CD8-positive, alpha-beta memory T cell (primary cell): ENCODE measurements at regions of chrX and their contacts with region 1.

Region 1: GRCh38 chrX:53071604-53072417 is 10.4 kb upstream of the TSPYL2 start:
- DNase-seq: peak; percentile 35 to 84 (median 78)
- H3K4me3 ChIP-seq: peak overlapping the region; percentile 81
- H3K4me3 Mint-ChIP-seq: peak overlapping the region; percentile 87 to 94 (median 93)
- H3K27ac ChIP-seq: no peak overlapping the region
- H3K27ac Mint-ChIP-seq: peak overlapping the region; percentile 80 to 96 (median 88)
- H3K4me1 ChIP-seq: peaks cover 7% of the 10 kb centered on the region
- H3K4me1 Mint-ChIP-seq: peaks cover 10 to 19% (median 13%) of the 10 kb centered on the region in 3 donors
- H3K27me3 ChIP-seq: no peaks in the 10 kb centered on the region
- H3K27me3 Mint-ChIP-seq: peaks cover 4 to 7% of the 10 kb centered on the region in 2 donors

Region 2: GRCh38 chrX:53031380-53031779 is 40.4 kb before region 1 on chrX:
- CTCF ChIA-PET with region 1: no interaction called
- POLR2A ChIA-PET with region 1: no interaction called
- DNase-seq: no peak
- H3K4me3 ChIP-seq: no peak overlapping the region
- H3K4me3 Mint-ChIP-seq: no peak overlapping the region
- H3K27ac ChIP-seq: no peak overlapping the region
- H3K27ac Mint-ChIP-seq: no peak overlapping the region
- H3K4me1 ChIP-seq: no peaks in the 10 kb centered on the region
- H3K4me1 Mint-ChIP-seq: no peaks in the 10 kb centered on the region
- H3K27me3 ChIP-seq: no peaks in the 10 kb centered on the region
- H3K27me3 Mint-ChIP-seq: peaks cover 13 to 18% of the 10 kb centered on the region in 2 donors

Region 3: GRCh38 chrX:53081925-53082772 is 10.3 kb after region 1 on chrX and contains the start of gene TSPYL2:
- CTCF ChIA-PET with region 1: interaction called, 9 read pairs
- POLR2A ChIA-PET with region 1: interaction called, 28 read pairs
- DNase-seq: peak; percentile 88 to 97 (median 93)
- H3K4me3 ChIP-seq: peak within 1 kb of the TSS; percentile 67
- H3K4me3 Mint-ChIP-seq: peak within 1 kb of the TSS; percentile 81 to 94 (median 88)
- H3K27ac ChIP-seq: peak within 1 kb of the TSS; percentile 64
- H3K27ac Mint-ChIP-seq: peak within 1 kb of the TSS; percentile 93 to 99 (median 98)
- H3K4me1 ChIP-seq: peaks cover 19% of the 10 kb centered on the region
- H3K4me1 Mint-ChIP-seq: peaks cover 32 to 54% (median 34%) of the 10 kb centered on the region in 3 donors
- H3K27me3 ChIP-seq: no peaks in the 10 kb centered on the region
- H3K27me3 Mint-ChIP-seq: peaks cover 0 to 19% of the 10 kb centered on the region in 2 donors
- total RNA-seq, gene TSPYL2: 38.4 to 47.9 TPM